ENCODE measurements at regions of chr2 and their contacts with region 1.

Region 1: GRCh38 chr2:96024336-96025193 is 10.2 kb downstream of the GPAT2 start:
- DNase-seq: no peak
- H3K4me3 ChIP-seq: no peak overlapping the region
- H3K4me3 Mint-ChIP-seq: no peak overlapping the region
- H3K27ac ChIP-seq: no peak overlapping the region
- H3K27ac Mint-ChIP-seq: no peak overlapping the region
- H3K4me1 ChIP-seq: no peaks in the 10 kb centered on the region
- H3K4me1 Mint-ChIP-seq: peaks cover 2% of the 10 kb centered on the region
- H3K27me3 ChIP-seq: no peaks in the 10 kb centered on the region
- H3K27me3 Mint-ChIP-seq: peaks cover 0 to 1% (median 0%) of the 10 kb centered on the region in 3 donors
- CTCF ChIP-seq: no peak

Region 2: DNA sequence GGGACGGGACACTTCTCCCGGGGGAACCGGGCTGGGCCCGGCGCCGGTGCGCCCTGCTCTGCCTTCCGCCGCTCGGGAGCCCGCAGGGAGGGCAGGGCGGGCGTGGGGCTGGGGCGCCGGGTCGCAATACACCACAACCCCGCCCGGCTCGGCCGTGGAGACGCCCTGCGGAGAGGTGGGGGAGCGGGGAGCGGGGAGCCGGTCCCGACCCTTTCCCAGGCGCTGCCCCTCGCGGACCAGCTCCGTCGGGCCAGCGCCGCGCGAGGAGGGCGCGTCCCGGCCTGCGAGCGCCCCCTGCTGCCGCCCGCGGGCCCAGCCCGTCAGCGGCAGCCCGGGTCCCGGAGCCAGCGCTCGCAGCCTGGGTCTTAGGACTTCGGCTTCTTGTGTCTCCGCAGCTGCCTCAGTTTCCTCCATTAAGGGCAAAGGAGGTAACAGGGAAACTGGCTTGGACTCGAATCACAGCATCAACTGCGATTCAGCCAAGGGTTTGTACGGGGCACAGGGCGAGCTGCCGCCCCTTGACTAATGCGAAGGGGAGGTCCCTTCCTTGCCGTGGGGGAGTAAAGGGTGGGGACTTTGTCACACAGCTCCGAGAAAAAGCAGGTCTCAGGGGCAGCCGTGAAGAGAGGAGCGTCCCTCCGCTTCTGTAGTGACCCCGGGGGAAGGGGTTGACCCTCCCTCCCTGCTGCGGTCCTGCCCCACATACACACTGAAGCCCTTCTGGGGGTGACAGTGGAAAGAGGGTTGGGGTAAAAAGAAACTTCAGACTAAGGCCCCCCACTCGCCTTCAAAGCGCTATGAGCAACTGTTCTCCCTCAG is 92.5 kb after region 1 on chr2:
- intact Hi-C with region 1: loop called in 1 of 2 experiments (anchors 10 kb)
- DNase-seq: peak; percentile 23 to 59 (median 54)
- H3K4me3 ChIP-seq: peak overlapping the region in 2 of 3 experiments; percentile 27 to 71
- H3K4me3 Mint-ChIP-seq: peak overlapping the region in 1 of 2 donors; percentile 73
- H3K27ac ChIP-seq: no peak overlapping the region
- H3K27ac Mint-ChIP-seq: no peak overlapping the region
- H3K4me1 ChIP-seq: peaks cover 3 to 18% of the 10 kb centered on the region in 2 donors
- H3K4me1 Mint-ChIP-seq: peaks cover 19% of the 10 kb centered on the region
- H3K27me3 ChIP-seq: peaks cover 5 to 45% of the 10 kb centered on the region in 2 donors
- H3K27me3 Mint-ChIP-seq: peaks cover 37 to 70% (median 40%) of the 10 kb centered on the region in 3 donors
- CTCF ChIP-seq: peak; percentile 95

Measured in CD14-positive monocyte (primary cell).